ENCODE measurements at regions of chr2 and their contacts with region 1.

Region 1: GRCh38 chr2:43191947-43192516 is 34.4 kb downstream of the ZFP36L2 start:
- DNase-seq: peak; percentile 51
- ATAC-seq: peak; percentile 80
- H3K4me3 Mint-ChIP-seq: no peak overlapping the region
- H3K27ac Mint-ChIP-seq: peak overlapping the region; percentile 66
- H3K4me1 Mint-ChIP-seq: peaks cover 46% of the 10 kb centered on the region
- H3K27me3 Mint-ChIP-seq: no peaks in the 10 kb centered on the region
- CTCF ChIP-seq: no peak

Region 2: GRCh38 chr2:43131024-43131889 is 60.8 kb before region 1 on chr2:
- CTCF ChIA-PET with region 1: interaction called, 11 read pairs
- POLR2A ChIA-PET with region 1: no interaction called
- DNase-seq: peak; percentile 62
- ATAC-seq: peak; percentile 26
- H3K4me3 Mint-ChIP-seq: no peak overlapping the region
- H3K27ac Mint-ChIP-seq: no peak overlapping the region
- H3K4me1 Mint-ChIP-seq: peaks cover 35% of the 10 kb centered on the region
- H3K27me3 Mint-ChIP-seq: no peaks in the 10 kb centered on the region; the same call in 1 of the 2 replicates
- CTCF ChIP-seq: no peak

Region 3: GRCh38 chr2:43169987-43170386 is 22.0 kb before region 1 on chr2:
- CTCF ChIA-PET with region 1: interaction called, 16 read pairs
- POLR2A ChIA-PET with region 1: no interaction called
- DNase-seq: peak; percentile 77
- ATAC-seq: peak; percentile 43
- H3K4me3 Mint-ChIP-seq: no peak overlapping the region
- H3K27ac Mint-ChIP-seq: no peak overlapping the region
- H3K4me1 Mint-ChIP-seq: peaks cover 33% of the 10 kb centered on the region
- H3K27me3 Mint-ChIP-seq: peaks cover 6% of the 10 kb centered on the region
- CTCF ChIP-seq: peak; percentile 92

Region 4: GRCh38 chr2:43178602-43179542 is 13.2 kb before region 1 on chr2:
- CTCF ChIA-PET with region 1: interaction called, 15 read pairs
- POLR2A ChIA-PET with region 1: interaction called, 3 read pairs
- DNase-seq: peak; percentile 73
- ATAC-seq: peak; percentile 72
- H3K4me3 Mint-ChIP-seq: peak overlapping the region; percentile 35
- H3K27ac Mint-ChIP-seq: peak overlapping the region; percentile 99
- H3K4me1 Mint-ChIP-seq: peaks cover 53% of the 10 kb centered on the region
- H3K27me3 Mint-ChIP-seq: peaks cover 6% of the 10 kb centered on the region
- CTCF ChIP-seq: no peak

Region 5: DNA sequence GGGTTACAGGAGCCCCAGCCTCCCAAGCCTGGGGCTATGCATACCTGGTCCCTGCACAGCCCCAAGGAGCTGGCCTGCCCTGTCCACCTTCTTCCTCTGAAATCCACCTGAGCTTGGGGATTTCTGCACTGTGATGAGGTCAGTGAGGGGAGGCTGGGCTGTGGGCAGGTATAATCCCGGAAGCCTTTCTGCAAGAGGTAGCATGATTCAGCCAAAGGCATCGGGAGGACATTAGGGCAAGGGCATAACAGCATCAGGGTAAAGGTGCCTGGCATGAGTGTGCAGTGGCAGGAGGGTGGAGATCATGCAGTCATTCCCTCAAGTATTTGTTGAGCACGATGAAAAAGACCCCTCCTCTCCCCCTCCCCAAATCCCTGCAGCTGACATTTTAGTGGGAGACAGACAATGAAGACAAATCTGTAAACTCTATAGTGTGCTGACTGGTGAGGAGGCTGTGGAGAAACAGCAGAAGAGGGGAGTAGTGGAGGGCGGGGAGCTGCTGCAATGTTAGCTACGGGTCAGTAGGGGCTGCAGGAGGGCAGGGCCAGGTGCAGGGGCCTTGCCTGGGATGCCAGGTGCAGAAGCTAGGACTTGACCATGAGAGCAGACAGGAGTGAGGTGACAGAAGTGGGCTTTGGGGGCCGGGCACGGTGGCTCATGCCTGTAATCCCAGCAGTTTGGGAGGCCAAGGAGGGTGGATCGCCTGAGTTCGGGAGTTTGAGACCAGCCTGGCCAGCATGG is 15.7 kb after region 1 on chr2:
- CTCF ChIA-PET with region 1: interaction called, 13 read pairs
- POLR2A ChIA-PET with region 1: no interaction called
- DNase-seq: peak; percentile 59
- ATAC-seq: peak; percentile 94
- H3K4me3 Mint-ChIP-seq: no peak overlapping the region
- H3K27ac Mint-ChIP-seq: peak overlapping the region; percentile 9; the same call in 1 of the 2 replicates
- H3K4me1 Mint-ChIP-seq: peaks cover 19% of the 10 kb centered on the region
- H3K27me3 Mint-ChIP-seq: no peaks in the 10 kb centered on the region
- CTCF ChIP-seq: no peak

Region 6: DNA sequence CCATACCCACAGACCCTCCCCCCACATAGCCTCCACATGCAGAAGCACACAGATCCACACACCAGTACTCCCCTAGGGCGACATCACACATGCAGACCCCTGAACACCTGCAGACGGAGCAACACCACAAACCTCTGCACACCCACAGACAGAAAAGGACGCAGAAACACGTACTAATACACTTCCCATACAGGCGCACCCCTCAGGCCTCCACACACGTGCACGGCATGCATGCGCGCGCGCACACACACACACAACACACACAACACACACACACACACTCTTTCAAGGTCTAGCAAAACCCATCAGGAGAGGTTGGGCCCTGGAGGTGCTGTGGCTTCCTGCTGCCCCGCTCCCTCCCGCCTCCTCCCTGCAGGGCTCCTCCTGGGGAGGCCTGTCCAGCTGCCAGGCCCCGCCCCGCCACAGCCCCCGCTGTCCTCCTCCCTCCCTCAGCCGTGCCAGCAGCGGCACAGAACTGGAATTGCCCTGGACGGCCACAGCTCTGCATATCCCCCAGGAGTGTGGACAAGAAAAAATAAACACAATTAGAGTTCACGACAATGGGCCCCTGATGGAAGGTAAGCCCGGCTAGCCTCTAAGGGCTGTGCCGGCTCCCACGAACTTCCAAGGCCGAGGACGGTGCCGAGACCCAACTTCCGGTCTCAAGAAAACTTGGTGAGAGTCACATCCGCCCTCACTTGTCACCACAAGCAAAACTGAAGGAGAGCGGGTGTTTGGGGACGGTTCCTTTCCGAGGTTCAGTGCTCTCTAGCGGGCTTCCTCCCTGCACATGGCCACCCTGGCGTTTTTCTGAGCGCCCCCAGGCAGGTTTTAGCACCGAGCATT is 27.6 kb after region 1 on chr2:
- CTCF ChIA-PET with region 1: interaction called, 16 read pairs
- POLR2A ChIA-PET with region 1: no interaction called
- DNase-seq: peak; percentile 77
- ATAC-seq: peak; percentile 6
- H3K4me3 Mint-ChIP-seq: peak overlapping the region; percentile 74
- H3K27ac Mint-ChIP-seq: peak overlapping the region; percentile 99
- H3K4me1 Mint-ChIP-seq: peaks cover 74% of the 10 kb centered on the region
- H3K27me3 Mint-ChIP-seq: no peaks in the 10 kb centered on the region
- CTCF ChIP-seq: no peak